HCT116 (cell line): ENCODE measurements at regions of chr1 and their contacts with region 1.

Region 1: GRCh38 chr1:152926091-152926490 is 17.7 kb downstream of the IVL start:
- DNase-seq: peak; percentile 24
- ATAC-seq: peak; percentile 83
- H3K4me3 ChIP-seq: no peak overlapping the region
- H3K27ac ChIP-seq: no peak overlapping the region
- H3K4me1 ChIP-seq: no peaks in the 10 kb centered on the region
- H3K27me3 ChIP-seq: peaks cover 19% of the 10 kb centered on the region
- CTCF ChIP-seq: peak; percentile 53 to 64 (median 62); a peak in 4 of 6 replicates
- POLR2A ChIP-seq: no peak
- RAD21 ChIP-seq: peak; percentile 76

Region 2: GRCh38 chr1:152745289-152745704 is 180.8 kb before region 1 on chr1:
- CTCF ChIA-PET with region 1: no interaction called
- POLR2A ChIA-PET with region 1: no interaction called
- RAD21 ChIA-PET with region 1: no interaction called
- intact Hi-C with region 1: loop called (anchors 5 kb)
- DNase-seq: peak; percentile 21
- ATAC-seq: peak; percentile 61; the same call in 1 of the 2 replicates
- H3K4me3 ChIP-seq: no peak overlapping the region
- H3K27ac ChIP-seq: no peak overlapping the region
- H3K4me1 ChIP-seq: no peaks in the 10 kb centered on the region
- H3K27me3 ChIP-seq: peaks cover 26% of the 10 kb centered on the region
- CTCF ChIP-seq: peak; percentile 18 to 42 (median 38); a peak in 4 of 6 replicates
- POLR2A ChIP-seq: no peak
- RAD21 ChIP-seq: peak; percentile 47

Region 3: DNA sequence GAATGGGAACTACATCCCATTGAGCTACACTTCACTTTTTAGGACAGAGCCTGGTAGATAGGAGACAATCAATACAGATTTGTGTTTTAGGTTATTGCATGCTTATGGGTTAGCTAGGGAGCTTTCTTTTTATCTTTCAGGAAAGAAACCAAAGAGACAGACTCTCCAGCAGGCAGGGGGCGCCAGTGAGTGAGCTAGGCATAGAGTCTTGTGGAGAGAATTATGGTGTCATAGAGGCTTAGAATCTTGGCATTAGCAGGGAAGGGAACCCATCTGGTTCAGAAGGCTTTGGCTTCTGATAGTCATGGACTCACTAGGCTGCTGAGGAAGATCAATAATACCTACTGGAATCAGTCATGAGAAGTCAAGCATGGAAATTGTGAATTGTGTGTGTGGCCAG is 48.0 kb before region 1 on chr1 and contains the start of gene SMCP:
- CTCF ChIA-PET with region 1: interaction called, 46 read pairs
- POLR2A ChIA-PET with region 1: no interaction called
- RAD21 ChIA-PET with region 1: no interaction called
- intact Hi-C with region 1: no loop called
- DNase-seq: no peak
- ATAC-seq: peak; percentile 62
- H3K4me3 ChIP-seq: no peak within 1 kb of the TSS
- H3K27ac ChIP-seq: no peak within 1 kb of the TSS
- H3K4me1 ChIP-seq: no peaks in the 10 kb centered on the region
- H3K27me3 ChIP-seq: peaks cover 10% of the 10 kb centered on the region; the same call in 1 of the 2 replicates
- CTCF ChIP-seq: peak; percentile 16 to 65 (median 57); a peak in 5 of 6 replicates
- POLR2A ChIP-seq: no peak
- RAD21 ChIP-seq: peak; percentile 42
- total RNA-seq, gene SMCP: not detected